Activated CD4-positive, alpha-beta T cell treated with anti-CD3 and anti-CD28 coated beads for 36 hours (primary cell): ENCODE measurements at regions of chr1 and their contacts with region 1.

Region 1: DNA sequence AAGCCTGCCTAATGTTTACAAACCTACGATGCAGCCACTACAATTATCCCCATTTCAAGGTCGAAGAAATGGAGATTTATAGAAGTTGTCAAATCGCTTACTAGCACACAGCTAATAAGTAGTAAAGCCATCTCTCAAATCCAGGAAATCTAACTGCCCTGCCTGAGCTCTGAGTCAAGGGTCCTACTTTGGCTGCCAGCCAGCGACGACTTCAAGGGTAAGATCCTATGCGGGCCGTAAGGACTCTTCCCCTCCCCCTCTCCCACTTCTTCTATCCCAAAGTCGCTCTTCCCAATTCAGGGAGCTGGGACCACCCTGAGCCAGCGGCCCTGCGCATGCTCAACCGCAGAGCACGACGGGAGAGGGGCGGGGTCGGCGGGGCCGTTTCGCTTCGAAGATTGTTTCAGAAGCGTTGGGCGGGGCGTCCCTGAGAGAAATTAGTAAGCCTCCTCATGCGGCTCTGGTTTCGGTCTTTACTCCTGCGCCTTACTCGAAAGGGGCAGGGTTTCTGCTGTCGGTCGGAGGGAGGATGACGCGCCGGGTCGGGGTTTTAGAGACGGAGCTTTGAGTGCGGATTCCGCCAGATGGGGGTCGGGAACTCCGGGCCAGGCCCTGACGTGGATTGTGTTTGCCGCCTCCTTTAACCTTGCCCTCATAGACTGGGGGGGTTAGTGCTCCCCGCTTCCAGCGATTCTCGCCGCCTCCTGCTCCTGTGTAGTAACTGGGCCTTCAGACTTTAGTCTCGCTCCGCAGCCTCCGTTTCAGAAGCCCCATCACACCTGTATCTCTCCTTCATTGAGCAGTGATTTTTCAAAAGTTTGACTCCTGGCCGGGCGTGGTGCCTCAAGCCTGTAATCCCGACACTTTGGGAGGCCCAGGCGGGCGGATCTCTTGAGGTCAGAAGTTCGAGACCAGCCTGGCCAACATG is at the start of gene ZMYM1:
- DNase-seq: peak; percentile 95
- ATAC-seq: peak; percentile 97
- H3K4me3 Mint-ChIP-seq: peak within 1 kb of the TSS; percentile 88
- H3K27ac Mint-ChIP-seq: peak within 1 kb of the TSS; percentile 97
- H3K4me1 Mint-ChIP-seq: peaks cover 36% of the 10 kb centered on the region
- H3K27me3 Mint-ChIP-seq: peaks cover 5% of the 10 kb centered on the region
- total RNA-seq, gene ZMYM1: 3.3 to 5.7 TPM

Region 2: DNA sequence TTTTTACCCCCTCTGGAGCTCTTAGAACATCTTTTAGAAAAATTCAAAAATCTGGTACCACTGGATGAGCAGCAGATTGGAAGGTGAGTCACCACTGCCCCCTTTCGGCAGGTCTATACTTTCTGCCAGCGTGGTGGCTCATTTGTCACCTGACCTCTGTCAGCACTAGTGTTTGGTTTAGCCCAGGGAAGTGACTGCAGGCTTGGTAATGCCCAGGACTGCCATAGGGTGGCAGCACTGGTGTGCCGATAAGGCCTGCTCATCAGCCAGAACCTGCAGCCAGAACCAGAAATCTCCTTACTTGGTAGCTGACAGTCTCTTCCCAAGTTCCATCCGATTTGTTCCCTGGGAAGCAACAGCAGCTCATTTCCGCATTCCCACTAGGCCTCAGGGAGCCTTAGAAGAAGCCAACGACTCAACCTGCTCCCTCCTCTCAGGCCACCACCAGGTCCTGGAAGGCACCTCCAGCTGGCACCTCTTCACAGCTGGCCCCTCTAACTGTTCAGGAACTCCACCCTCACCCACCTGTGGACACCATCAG is 226.5 kb before region 1 on chr1:
- CTCF ChIA-PET with region 1: no interaction called
- POLR2A ChIA-PET with region 1: no interaction called
- intact Hi-C with region 1: loop called in 1 of 2 experiments (anchors 1 kb)
- DNase-seq: peak; percentile 95
- ATAC-seq: peak; percentile 100
- H3K4me3 Mint-ChIP-seq: no peak overlapping the region
- H3K27ac Mint-ChIP-seq: peak overlapping the region; percentile 34
- H3K4me1 Mint-ChIP-seq: peaks cover 17% of the 10 kb centered on the region
- H3K27me3 Mint-ChIP-seq: no peaks in the 10 kb centered on the region

Region 3: GRCh38 chr1:34859446-34860200 is 219.6 kb before region 1 on chr1 and contains the start of gene SMIM12:
- CTCF ChIA-PET with region 1: interaction called, 3 read pairs
- POLR2A ChIA-PET with region 1: no interaction called
- intact Hi-C with region 1: loop called (anchors 1 to 10 kb)
- DNase-seq: peak; percentile 95
- ATAC-seq: peak; percentile 95
- H3K4me3 Mint-ChIP-seq: peak within 1 kb of the TSS; percentile 98
- H3K27ac Mint-ChIP-seq: peak within 1 kb of the TSS; percentile 99
- H3K4me1 Mint-ChIP-seq: peaks cover 51% of the 10 kb centered on the region
- H3K27me3 Mint-ChIP-seq: no peaks in the 10 kb centered on the region
- total RNA-seq, gene SMIM12: 42.4 to 45.0 TPM

Region 4: DNA sequence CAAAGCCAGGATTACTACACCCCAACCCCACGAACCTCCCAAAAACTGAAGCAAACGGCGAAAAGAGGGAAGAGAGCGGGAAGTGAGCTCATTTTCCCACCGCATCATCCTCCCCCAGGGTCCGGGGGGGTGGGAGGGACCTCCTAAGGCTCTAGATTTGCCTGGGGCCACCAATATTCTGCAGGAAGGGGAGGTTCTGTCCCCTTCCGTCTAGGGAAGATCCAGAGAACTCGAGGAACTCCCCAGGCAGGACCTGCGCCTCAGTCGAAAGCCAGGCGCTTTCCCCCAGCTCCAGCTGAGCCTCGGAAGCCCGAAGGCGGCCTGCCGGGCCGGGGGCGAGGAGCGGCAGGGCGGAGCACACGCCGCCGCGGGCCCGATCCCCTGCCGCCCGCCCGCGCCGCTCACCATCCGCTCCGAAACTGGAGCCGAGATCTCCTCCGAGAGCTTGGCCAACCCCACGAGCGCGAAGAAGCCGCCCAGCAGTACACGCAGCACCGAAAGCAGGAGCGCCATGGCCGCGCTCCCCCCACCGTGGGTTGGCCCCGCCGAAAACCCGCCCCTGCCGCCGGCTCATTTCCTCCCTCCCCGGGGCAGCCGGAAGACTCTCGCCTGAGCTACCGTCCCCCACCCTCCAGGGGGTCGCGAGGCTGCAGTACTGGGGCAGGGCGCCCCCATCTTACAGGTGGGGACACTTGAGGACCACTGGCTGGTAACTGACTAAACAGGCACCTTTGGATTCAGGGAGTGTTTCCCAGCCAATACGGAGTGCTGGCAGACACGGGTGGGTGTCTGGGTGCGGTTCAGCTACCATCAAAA is 94.3 kb before region 1 on chr1 and contains the start of gene TMEM35B:
- CTCF ChIA-PET with region 1: interaction called, 5 read pairs
- POLR2A ChIA-PET with region 1: no interaction called
- intact Hi-C with region 1: loop called in 1 of 2 experiments (anchors 1 kb)
- DNase-seq: peak; percentile 88
- ATAC-seq: peak; percentile 94
- H3K4me3 Mint-ChIP-seq: peak within 1 kb of the TSS; percentile 93
- H3K27ac Mint-ChIP-seq: peak within 1 kb of the TSS; percentile 93
- H3K4me1 Mint-ChIP-seq: peaks cover 43% of the 10 kb centered on the region
- H3K27me3 Mint-ChIP-seq: no peaks in the 10 kb centered on the region
- total RNA-seq, gene TMEM35B: 15.8 to 19.0 TPM

Region 5: GRCh38 chr1:35180776-35181374 is 101.6 kb after region 1 on chr1:
- CTCF ChIA-PET with region 1: no interaction called
- POLR2A ChIA-PET with region 1: interaction called, 4 read pairs
- intact Hi-C with region 1: loop called in 1 of 2 experiments (anchors 5 kb)
- DNase-seq: peak; percentile 36
- ATAC-seq: peak; percentile 84
- H3K4me3 Mint-ChIP-seq: peak overlapping the region; percentile 7
- H3K27ac Mint-ChIP-seq: peak overlapping the region; percentile 68
- H3K4me1 Mint-ChIP-seq: peaks cover 76% of the 10 kb centered on the region
- H3K27me3 Mint-ChIP-seq: no peaks in the 10 kb centered on the region